GM12878 (cell line): ENCODE measurements at regions of chr1 and their contacts with region 1.

Region 1: DNA sequence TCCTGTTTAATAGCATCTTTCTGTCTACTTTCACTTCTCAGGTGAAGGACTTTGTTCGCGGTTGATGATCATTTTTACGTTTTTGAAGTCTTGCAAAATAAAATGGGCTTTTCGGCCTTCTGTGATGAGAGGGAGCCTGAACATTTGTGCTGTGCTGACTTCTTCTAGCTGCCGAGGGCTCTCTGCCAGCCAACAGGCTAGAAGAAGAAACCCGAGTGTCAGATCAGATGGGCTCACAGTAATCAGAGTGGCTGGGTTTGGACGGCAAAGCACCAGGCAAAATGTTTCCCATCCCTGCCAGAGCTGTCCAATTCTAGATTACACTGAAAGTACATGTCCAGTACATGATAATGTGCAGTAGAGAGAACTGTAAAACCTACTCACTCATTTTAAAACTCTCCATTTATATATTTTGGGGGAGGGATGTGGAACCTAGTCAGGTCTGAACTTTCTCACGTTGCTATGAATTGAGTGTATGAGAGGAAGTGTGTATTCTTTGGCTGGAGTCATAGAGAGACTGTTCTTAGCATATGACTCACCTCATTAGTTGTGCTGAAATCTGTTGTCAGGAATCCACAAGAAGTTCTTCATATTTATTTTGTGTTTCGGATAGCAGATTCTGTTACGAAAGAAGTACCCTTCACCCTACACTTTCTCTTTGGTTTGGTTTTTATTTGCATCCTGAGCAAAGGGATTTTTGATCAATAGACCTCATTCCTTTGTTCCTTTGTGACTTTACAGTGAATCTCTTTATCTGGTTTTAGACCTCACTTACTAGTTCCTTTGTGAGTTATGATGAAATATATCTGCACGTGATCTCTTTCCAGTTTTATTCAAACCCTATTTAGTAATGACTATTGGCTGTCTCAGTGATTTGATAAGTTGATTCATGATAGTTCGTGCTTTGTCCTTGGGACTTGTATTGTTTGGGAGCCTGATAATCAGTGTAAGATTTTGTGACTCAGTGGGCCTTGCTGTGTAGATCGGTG is 4.8 kb downstream of the ATP1A1 start:
- DNase-seq: peak; percentile 96
- ATAC-seq: peak; percentile 60
- H3K4me3 ChIP-seq: peak overlapping the region; percentile 95
- H3K27ac ChIP-seq: peak overlapping the region; percentile 96
- H3K4me1 ChIP-seq: peaks cover 38% of the 10 kb centered on the region
- H3K27me3 ChIP-seq: no peaks in the 10 kb centered on the region
- CTCF ChIP-seq: no peak
- EP300 ChIP-seq: peak; percentile 84 to 92
- POLR2A ChIP-seq: peak; percentile 56
- RAD21 ChIP-seq: no peak

Region 2: GRCh38 chr1:116288201-116288761 is 89.6 kb before region 1 on chr1:
- CTCF ChIA-PET with region 1: no interaction called
- POLR2A ChIA-PET with region 1: no interaction called
- RAD21 ChIA-PET with region 1: no interaction called
- SMC1A ChIA-PET with region 1: no interaction called
- in situ Hi-C with region 1: no loop called
- intact Hi-C with region 1: no loop called
- DNase-seq: peak; percentile 57
- ATAC-seq: peak; percentile 98
- H3K4me3 ChIP-seq: no peak overlapping the region
- H3K27ac ChIP-seq: no peak overlapping the region
- H3K4me1 ChIP-seq: peaks cover 15% of the 10 kb centered on the region
- H3K27me3 ChIP-seq: no peaks in the 10 kb centered on the region
- CTCF ChIP-seq: no peak
- EP300 ChIP-seq: peak in 1 of 2 experiments; percentile 23; a peak in 1 of 4 replicates
- POLR2A ChIP-seq: no peak
- RAD21 ChIP-seq: 0 out of 2 replicates have a peak, but pooled peaks have one; percentile 7

Region 3: GRCh38 chr1:116360429-116361173 is 17.2 kb before region 1 on chr1:
- CTCF ChIA-PET with region 1: interaction called, 14 read pairs
- POLR2A ChIA-PET with region 1: interaction called, 3 read pairs
- RAD21 ChIA-PET with region 1: no interaction called
- SMC1A ChIA-PET with region 1: interaction called, 11 read pairs
- in situ Hi-C with region 1: no loop called
- intact Hi-C with region 1: no loop called
- DNase-seq: no peak
- ATAC-seq: peak; percentile 70
- H3K4me3 ChIP-seq: no peak overlapping the region
- H3K27ac ChIP-seq: no peak overlapping the region
- H3K4me1 ChIP-seq: no peaks in the 10 kb centered on the region
- H3K27me3 ChIP-seq: no peaks in the 10 kb centered on the region
- CTCF ChIP-seq: peak; percentile 21 to 44 (median 32); a peak in 2 of 6 replicates
- EP300 ChIP-seq: no peak
- POLR2A ChIP-seq: no peak
- RAD21 ChIP-seq: peak; percentile 64

Region 4: DNA sequence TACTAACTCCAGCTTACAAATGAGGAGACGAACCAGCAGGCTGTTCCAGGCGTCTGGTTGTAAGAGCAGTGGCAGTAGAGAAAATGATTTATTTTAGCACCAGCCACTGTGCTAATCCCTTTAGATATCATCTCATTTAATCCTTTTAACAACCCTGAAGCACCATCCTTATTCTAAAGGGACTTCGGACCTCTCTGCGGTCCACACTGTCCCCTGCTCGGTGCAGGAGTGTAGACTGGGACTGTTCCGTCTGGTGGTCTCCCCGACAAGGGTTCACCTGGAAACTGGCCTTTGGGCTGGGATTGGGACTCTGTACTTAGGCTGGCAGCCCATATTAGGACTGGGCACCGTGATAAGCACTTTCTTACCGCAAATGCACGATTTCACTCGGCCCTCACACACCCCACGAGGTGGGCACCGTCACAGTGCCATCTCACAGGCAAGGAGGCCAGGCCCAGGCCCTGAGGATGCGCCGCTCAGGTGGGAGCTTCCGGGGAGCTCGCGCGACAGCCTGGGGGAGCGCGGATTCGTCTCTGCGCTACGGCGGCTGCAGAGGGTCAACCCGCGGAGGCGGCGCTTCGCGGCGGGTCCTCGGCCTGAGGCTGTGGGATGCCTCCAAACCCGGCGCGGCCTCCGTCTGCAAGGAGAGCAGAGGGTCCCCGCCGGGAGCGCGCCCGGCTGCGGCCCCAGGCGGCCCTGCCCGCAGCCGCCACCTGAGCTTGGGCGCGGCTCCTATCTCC is 40.4 kb after region 1 on chr1:
- CTCF ChIA-PET with region 1: interaction called, 6 read pairs
- POLR2A ChIA-PET with region 1: interaction called, 13 read pairs
- RAD21 ChIA-PET with region 1: interaction called, 30 read pairs
- SMC1A ChIA-PET with region 1: interaction called, 31 read pairs
- in situ Hi-C with region 1: no loop called
- intact Hi-C with region 1: loop called (anchors 2 kb)
- DNase-seq: peak; percentile 51
- ATAC-seq: peak; percentile 96
- H3K4me3 ChIP-seq: peak overlapping the region; percentile 96
- H3K27ac ChIP-seq: peak overlapping the region; percentile 89
- H3K4me1 ChIP-seq: peaks cover 11% of the 10 kb centered on the region
- H3K27me3 ChIP-seq: no peaks in the 10 kb centered on the region
- CTCF ChIP-seq: no peak
- EP300 ChIP-seq: no peak
- POLR2A ChIP-seq: peak; percentile 100
- RAD21 ChIP-seq: no peak

Region 5: DNA sequence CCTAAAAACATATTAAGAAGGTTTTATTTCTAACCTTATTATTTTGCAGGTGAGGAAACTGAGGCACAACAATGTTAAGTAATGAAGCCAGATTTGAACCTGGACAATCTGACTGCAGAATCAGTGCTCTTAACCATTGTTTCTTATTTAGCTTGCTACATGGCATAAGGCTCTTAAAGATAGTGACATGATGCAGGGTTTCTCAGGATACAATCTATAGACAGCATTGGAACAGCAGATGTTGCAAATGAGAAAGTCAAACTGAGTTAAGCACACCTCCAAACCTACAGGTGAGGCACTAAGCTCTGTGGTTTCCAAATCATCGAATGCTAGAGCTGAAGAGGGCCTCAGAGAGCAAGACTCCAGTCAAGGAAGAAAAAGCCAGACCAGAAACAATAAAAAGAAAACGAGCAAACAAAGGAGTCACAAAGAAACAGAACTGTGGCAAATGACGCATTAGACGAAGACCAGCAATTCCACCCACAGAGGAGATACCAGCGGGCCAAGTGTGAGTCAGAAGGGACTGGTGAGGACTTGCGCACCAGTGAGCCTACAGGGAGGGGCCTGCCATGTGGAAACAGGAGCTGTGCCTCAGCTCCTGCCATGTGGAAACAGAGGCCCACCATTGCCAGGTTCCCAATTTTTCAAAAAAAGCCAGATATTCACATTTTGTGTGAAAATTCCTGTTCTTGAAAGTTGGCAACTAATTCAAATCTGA is 178.6 kb after region 1 on chr1:
- CTCF ChIA-PET with region 1: no interaction called
- POLR2A ChIA-PET with region 1: interaction called, 5 read pairs
- RAD21 ChIA-PET with region 1: interaction called, 10 read pairs
- SMC1A ChIA-PET with region 1: no interaction called
- in situ Hi-C with region 1: no loop called
- intact Hi-C with region 1: loop called (anchors 2 kb)
- DNase-seq: peak; percentile 96
- ATAC-seq: peak; percentile 70
- H3K4me3 ChIP-seq: 0 out of 2 replicates have a peak overlapping the region, but pooled peaks have one; percentile 9
- H3K27ac ChIP-seq: peak overlapping the region; percentile 100
- H3K4me1 ChIP-seq: peaks cover 69% of the 10 kb centered on the region
- H3K27me3 ChIP-seq: no peaks in the 10 kb centered on the region
- CTCF ChIP-seq: no peak; a peak in 1 of 6 replicates
- EP300 ChIP-seq: peak; percentile 80 to 96
- POLR2A ChIP-seq: peak; percentile 64
- RAD21 ChIP-seq: peak; percentile 37; the same call in 1 of the 2 replicates

Region 6: DNA sequence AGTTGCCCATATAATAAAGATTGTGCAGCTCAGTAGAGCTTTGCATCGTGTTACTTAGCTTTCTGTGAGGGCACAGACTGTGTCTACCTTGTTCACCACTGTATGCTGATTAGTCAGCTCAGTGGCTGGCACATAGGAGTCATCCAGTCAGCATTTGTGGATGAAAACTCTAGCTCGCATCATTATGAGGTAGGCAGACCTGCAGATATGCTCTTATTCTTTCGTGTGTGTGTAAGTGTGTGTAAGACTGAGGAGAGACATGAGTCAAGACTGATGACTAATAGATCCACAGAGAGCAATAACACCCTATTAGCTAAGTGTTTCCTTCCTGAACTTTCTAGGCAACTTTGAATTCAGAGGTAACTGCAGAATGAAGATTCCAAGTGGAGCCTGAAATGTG is 699.4 kb after region 1 on chr1:
- CTCF ChIA-PET with region 1: no interaction called
- POLR2A ChIA-PET with region 1: no interaction called
- RAD21 ChIA-PET with region 1: no interaction called
- SMC1A ChIA-PET with region 1: no interaction called
- in situ Hi-C with region 1: loop called (anchors 10 kb)
- intact Hi-C with region 1: no loop called
- DNase-seq: no peak
- ATAC-seq: peak; percentile 27; the same call in 2 of the 3 replicates
- H3K4me3 ChIP-seq: no peak overlapping the region
- H3K27ac ChIP-seq: no peak overlapping the region
- H3K4me1 ChIP-seq: no peaks in the 10 kb centered on the region
- H3K27me3 ChIP-seq: no peaks in the 10 kb centered on the region
- CTCF ChIP-seq: no peak
- EP300 ChIP-seq: no peak
- POLR2A ChIP-seq: no peak
- RAD21 ChIP-seq: no peak